Gastrocnemius medialis (tissue), 4 donors: ENCODE measurements at regions of chr11 and their contacts with region 1.

Region 1: DNA sequence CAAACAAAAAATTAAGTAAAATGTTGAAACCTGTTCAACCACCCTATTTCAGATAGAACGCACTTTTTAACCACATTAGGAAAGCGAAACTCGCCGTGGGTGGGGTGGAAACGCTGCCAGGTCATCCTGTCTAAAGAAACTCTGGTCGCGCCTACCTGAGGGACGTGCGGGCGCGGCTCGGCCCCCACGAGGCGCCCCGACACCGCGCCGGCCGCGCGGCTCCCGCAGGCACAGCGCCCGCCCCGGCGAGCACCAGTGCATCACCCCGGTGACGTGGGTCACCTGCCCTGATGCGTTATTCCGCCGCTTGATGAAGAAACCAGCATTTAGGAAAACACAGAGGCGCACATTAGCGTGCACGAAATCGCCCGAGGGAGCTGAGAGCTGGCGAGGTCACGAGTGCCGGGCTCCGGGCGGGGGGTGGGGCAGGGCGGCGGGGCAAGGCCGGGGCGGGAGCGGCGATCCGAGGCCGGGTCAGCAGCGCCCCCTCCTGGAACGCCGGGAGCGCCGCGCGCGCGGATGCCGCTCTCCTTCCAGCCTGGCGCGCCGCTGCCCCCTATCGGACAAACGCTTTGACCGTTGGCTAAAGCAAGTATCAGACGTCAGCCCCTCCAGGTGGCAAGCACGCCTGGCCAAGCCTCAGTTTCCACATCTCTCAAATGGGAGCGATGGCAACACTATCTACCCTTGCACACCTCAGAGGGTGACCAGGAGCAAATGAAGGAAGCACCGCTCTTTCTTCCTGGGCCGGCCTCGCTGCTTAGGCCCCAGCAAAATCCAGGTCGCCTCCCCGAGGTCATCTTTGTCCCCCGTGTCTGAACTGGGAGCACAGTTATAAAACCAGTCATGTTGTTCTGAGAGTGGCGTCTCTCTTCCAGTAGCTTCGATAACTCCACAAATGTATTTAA is 15.7 kb upstream of the SNX32 start:
- DNase-seq: peak; percentile 84 to 88
- ATAC-seq: peak; percentile 97
- H3K4me3 ChIP-seq: peak overlapping the region; percentile 43 to 82 (median 68)
- H3K27ac ChIP-seq: peak overlapping the region; percentile 56 to 80 (median 64)
- H3K4me1 ChIP-seq: peaks cover 5 to 6% of the 10 kb centered on the region in 2 donors
- H3K27me3 ChIP-seq: no peaks in the 10 kb centered on the region
- CTCF ChIP-seq: peak; percentile 95 to 100 (median 96)
- POLR2A ChIP-seq: peak in 1 of 2 donors; percentile 49

Region 2: GRCh38 chr11:65711785-65712632 is 106.1 kb before region 1 on chr11 and contains the start of gene KAT5:
- in situ Hi-C with region 1: loop called (anchors 5 kb)
- intact Hi-C with region 1: loop called (anchors 1 kb)
- DNase-seq: peak; percentile 97 to 98
- ATAC-seq: peak; percentile 92 to 94
- H3K4me3 ChIP-seq: peak within 1 kb of the TSS; percentile 73 to 97 (median 84)
- H3K27ac ChIP-seq: peak within 1 kb of the TSS; percentile 96 to 100 (median 99)
- H3K4me1 ChIP-seq: peaks cover 15 to 18% of the 10 kb centered on the region in 2 donors
- H3K27me3 ChIP-seq: no peaks in the 10 kb centered on the region
- CTCF ChIP-seq: peak; percentile 98 to 100 (median 100)
- POLR2A ChIP-seq: peak; percentile 83 to 86
- total RNA-seq, gene KAT5: 40.0 to 69.4 (median 50.0) TPM

Region 3: DNA sequence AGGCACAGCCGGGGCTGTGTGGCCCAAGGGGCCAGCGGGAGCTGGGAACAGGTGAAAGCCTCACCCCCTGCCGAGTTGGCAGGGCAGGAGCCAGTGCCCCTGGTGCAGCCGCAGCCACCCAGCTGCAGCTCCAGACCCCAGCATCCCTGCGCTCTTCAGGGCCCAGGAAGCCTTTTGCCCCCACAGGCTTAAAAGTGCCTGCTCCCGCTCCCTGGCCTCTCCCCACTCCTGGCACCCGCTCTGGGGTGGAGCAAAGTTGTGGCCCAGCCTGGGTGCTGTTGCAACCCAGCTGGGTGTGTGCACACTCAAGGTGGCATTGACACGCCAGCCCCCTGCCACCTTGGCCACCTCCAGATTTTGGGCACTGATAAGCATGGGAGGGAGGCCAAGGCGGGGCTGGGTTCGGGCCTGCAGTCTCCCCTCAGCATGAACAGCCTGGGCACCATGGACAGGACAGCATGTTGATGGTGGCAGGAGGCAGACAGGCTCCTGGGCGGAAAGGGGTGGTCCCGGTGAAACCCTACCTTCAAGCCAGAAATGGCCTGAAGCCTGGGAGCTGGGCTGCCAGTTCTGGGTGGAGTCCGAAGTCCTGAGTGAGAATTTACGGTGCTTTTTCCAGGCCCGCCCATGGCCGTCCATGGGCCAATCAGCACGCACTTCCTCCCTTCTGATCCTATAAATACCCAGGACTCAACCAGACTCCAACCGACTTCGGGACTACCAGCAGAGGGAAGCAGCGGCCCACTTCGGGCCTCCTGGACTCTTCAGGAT is 74.0 kb before region 1 on chr11:
- in situ Hi-C with region 1: no loop called
- intact Hi-C with region 1: loop called (anchors 1 kb)
- DNase-seq: peak in 1 of 2 donors; percentile 19
- ATAC-seq: peak in 1 of 2 donors; percentile 68
- H3K4me3 ChIP-seq: no peak overlapping the region
- H3K27ac ChIP-seq: no peak overlapping the region
- H3K4me1 ChIP-seq: no peaks in the 10 kb centered on the region
- H3K27me3 ChIP-seq: peaks cover 0 to 5% (median 4%) of the 10 kb centered on the region in 3 donors
- CTCF ChIP-seq: peak in 3 of 5 experiments; percentile 11 to 39 (median 30)
- POLR2A ChIP-seq: no peak

Region 4: GRCh38 chr11:65773784-65774411 is 44.2 kb before region 1 on chr11:
- in situ Hi-C with region 1: loop called in 1 of 4 experiments (anchors 5 kb)
- intact Hi-C with region 1: no loop called
- DNase-seq: no peak
- ATAC-seq: no peak
- H3K4me3 ChIP-seq: no peak overlapping the region
- H3K27ac ChIP-seq: no peak overlapping the region
- H3K4me1 ChIP-seq: peaks cover 0 to 8% of the 10 kb centered on the region in 2 donors
- H3K27me3 ChIP-seq: no peaks in the 10 kb centered on the region
- CTCF ChIP-seq: no peak
- POLR2A ChIP-seq: no peak

Region 5: GRCh38 chr11:65779851-65780577 is 38.1 kb before region 1 on chr11:
- in situ Hi-C with region 1: no loop called
- intact Hi-C with region 1: loop called (anchors 1 kb)
- DNase-seq: peak in 1 of 2 donors; percentile 72
- ATAC-seq: peak; percentile 61 to 65
- H3K4me3 ChIP-seq: peak overlapping the region; percentile 59 to 97 (median 74)
- H3K27ac ChIP-seq: peak overlapping the region; percentile 59 to 88 (median 80)
- H3K4me1 ChIP-seq: peaks cover 9% of the 10 kb centered on the region in 2 donors
- H3K27me3 ChIP-seq: peaks cover 0 to 7% (median 4%) of the 10 kb centered on the region in 3 donors
- CTCF ChIP-seq: peak; percentile 77 to 99 (median 87)
- POLR2A ChIP-seq: peak in 1 of 2 donors; percentile 44